ENCODE measurements at regions of chr12 and their contacts with region 1.

Region 1: DNA sequence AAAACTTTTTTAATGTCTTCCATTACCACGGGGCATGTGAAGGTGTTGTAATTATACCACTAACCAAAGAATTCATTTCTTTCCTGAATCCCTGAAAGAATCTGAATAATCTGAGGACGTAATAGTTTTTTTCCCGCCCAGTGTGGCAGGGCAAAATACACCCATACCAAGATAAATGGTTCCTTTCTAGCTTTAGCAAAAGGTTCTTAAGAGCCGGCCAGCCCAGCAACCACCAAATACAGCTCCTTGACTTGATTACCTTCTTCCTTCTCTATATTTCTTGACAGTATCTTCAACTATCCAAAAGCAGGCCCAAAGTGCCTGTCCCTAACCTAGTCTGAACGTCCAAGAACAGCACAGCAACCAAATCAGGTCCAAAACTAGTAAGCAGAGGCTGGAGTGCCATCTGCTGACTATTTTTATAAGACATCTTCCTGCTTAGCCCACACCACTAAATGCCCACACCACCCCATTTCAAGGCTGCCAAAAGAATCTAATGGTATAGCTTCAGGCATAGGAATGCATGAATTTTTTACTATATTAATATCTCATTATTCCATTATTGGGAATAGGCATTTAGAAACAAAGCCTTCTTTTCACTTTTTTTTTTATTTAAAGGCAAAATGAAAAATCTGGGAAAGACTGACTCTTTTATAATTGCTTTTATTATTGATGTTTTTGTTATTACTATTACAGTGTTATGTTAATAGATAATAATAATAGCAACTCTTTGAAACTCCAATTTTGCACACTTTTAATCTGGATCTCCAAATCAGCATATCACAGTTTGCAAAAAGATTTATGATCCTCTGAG is 524.4 kb downstream of the MED13L start:
- DNase-seq: peak; percentile 77
- ATAC-seq: peak; percentile 100
- H3K4me3 ChIP-seq: no peak overlapping the region
- H3K27ac ChIP-seq: no peak overlapping the region
- H3K4me1 ChIP-seq: no peaks in the 10 kb centered on the region
- H3K27me3 ChIP-seq: peaks cover 12% of the 10 kb centered on the region
- CTCF ChIP-seq: peak; percentile 81
- POLR2A ChIP-seq: no peak
- RAD21 ChIP-seq: peak; percentile 93

Region 2: DNA sequence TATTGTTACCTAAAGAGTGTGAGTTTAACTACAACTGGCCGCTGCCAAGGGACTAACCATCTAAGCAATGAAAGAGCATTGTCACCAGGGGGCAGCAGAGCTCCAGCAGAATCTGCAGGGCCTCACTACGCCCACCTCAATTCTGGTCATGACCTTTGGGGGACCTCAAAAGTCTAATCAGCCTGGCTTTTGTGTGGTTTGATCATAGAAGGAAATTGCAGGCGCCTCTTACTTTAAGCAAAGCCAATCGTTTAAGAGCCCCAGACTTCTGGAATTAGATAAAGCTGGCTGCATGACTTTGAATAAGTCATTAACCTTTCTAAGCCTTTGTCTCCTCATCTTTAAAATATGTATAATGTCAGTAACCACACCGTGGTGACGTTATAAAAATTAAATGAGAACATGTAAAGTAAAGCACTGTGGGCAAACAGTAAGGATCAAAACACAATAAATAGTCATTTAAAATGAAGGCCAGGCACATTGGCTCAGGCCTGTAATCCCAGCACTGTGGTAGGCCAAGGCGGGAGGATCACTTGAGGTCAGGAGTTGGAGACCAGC is 1127.7 kb before region 1 on chr12:
- CTCF ChIA-PET with region 1: interaction called, 3 read pairs
- POLR2A ChIA-PET with region 1: no interaction called
- dilution Hi-C with region 1: no loop called
- in situ Hi-C with region 1: no loop called
- intact Hi-C with region 1: loop called (anchors 1 kb)
- DNase-seq: peak; percentile 72
- ATAC-seq: peak; percentile 96
- H3K4me3 ChIP-seq: no peak overlapping the region
- H3K27ac ChIP-seq: no peak overlapping the region
- H3K4me1 ChIP-seq: no peaks in the 10 kb centered on the region
- H3K27me3 ChIP-seq: peaks cover 11% of the 10 kb centered on the region
- CTCF ChIP-seq: peak; percentile 87
- POLR2A ChIP-seq: no peak
- RAD21 ChIP-seq: peak; percentile 86

Region 3: DNA sequence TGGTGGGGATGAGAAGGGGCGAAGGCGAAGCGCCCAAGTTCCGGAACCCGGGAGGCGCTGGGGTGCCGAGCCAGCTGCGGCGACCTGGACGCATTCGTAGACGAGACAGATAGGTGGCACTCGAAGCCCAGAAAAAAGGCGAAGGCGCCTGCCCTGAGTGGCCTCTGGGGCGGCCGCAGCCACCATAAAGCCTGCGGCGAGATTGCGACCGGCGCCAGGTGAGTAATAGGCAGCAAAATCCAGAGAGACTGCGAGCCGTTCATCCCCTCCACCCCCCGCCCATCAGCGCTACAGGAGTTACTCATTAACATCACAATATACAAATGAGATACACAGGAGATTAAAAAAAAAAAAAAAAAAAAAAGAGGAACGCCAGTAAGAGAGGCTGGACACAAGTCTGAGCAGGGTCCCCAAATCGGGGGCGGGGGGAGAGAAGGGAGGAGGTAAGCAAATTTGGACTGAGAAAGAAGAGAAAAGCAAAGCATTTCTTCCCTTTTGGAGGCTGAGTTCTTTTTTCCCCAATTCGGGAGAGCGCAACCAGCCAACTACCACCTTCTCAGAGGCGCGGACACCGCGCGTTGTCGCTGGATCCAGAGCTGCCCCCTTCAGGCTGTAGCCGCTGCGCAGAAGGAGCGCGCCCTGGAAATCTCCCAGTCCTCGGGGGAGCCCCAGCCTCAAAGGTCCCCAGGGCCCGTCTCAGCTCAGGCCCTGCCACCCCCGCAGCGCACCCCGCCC is 1084.8 kb before region 1 on chr12:
- CTCF ChIA-PET with region 1: interaction called, 3 read pairs
- POLR2A ChIA-PET with region 1: no interaction called
- dilution Hi-C with region 1: no loop called
- in situ Hi-C with region 1: no loop called
- intact Hi-C with region 1: loop called (anchors 1 kb)
- DNase-seq: peak; percentile 84
- ATAC-seq: peak; percentile 59
- H3K4me3 ChIP-seq: peak overlapping the region; percentile 40
- H3K27ac ChIP-seq: peak overlapping the region; percentile 89
- H3K4me1 ChIP-seq: peaks cover 4% of the 10 kb centered on the region
- H3K27me3 ChIP-seq: no peaks in the 10 kb centered on the region
- CTCF ChIP-seq: peak; percentile 75
- POLR2A ChIP-seq: peak; percentile 23; the same call in 1 of the 2 replicates
- RAD21 ChIP-seq: peak; percentile 84

Region 4: GRCh38 chr12:115166698-115167315 is 586.3 kb before region 1 on chr12:
- CTCF ChIA-PET with region 1: no interaction called
- POLR2A ChIA-PET with region 1: no interaction called
- dilution Hi-C with region 1: no loop called
- in situ Hi-C with region 1: no loop called
- intact Hi-C with region 1: loop called (anchors 5 kb)
- DNase-seq: peak; percentile 47
- ATAC-seq: peak; percentile 68
- H3K4me3 ChIP-seq: no peak overlapping the region
- H3K27ac ChIP-seq: no peak overlapping the region
- H3K4me1 ChIP-seq: no peaks in the 10 kb centered on the region; the same call in 1 of the 2 replicates
- H3K27me3 ChIP-seq: no peaks in the 10 kb centered on the region
- CTCF ChIP-seq: peak; percentile 42
- POLR2A ChIP-seq: no peak
- RAD21 ChIP-seq: peak; percentile 57

Region 5: GRCh38 chr12:115916910-115917668 is 164.0 kb after region 1 on chr12:
- CTCF ChIA-PET with region 1: no interaction called
- POLR2A ChIA-PET with region 1: no interaction called
- dilution Hi-C with region 1: no loop called
- in situ Hi-C with region 1: no loop called
- intact Hi-C with region 1: loop called (anchors 5 kb)
- DNase-seq: no peak
- ATAC-seq: peak; percentile 78
- H3K4me3 ChIP-seq: no peak overlapping the region
- H3K27ac ChIP-seq: no peak overlapping the region
- H3K4me1 ChIP-seq: peaks cover 3% of the 10 kb centered on the region
- H3K27me3 ChIP-seq: peaks cover 28% of the 10 kb centered on the region
- CTCF ChIP-seq: peak; percentile 83
- POLR2A ChIP-seq: no peak
- RAD21 ChIP-seq: peak; percentile 88